OCI-LY7 (cell line): ENCODE measurements at regions of chr2 and their contacts with region 1.

Region 1: DNA sequence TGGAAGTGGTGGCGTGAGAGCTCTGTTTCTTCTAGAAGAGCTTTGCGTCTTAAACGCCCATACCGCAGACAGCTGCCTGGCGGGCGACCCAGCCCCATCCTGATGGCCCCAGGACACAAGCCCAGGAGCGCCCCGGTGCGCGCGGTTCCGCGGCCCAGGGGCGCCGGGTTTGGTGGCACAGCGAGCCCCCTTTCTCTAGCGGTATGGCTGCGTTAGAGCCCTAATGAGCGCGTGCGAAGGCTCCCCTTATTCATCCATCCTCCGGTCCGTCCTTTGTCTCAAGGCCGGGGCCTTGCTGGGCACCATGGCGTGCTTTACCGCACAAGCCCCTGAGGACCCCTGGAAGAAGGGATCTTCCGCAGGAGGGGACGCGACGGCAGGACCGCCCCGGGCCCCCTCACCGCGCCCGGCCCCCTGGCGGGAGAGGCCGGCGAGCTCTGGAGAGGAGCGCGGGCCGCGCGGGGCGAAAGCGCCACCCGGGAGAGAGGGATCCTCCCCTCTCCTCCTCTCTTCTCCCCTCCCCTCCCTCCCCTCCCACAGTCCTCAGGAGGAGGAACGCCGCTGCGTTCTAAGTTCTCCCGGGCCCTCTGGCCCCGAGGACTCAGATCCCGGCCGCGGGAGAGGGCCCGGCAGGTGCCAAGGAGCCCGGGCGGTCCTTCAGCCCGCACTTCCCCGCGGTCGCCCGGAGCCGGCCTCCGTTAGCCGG is 626 bp upstream of the SLC1A4 start:
- DNase-seq: peak; percentile 66
- H3K4me3 ChIP-seq: peak overlapping the region; percentile 82
- H3K27ac ChIP-seq: peak overlapping the region; percentile 25
- H3K4me1 ChIP-seq: peaks cover 47% of the 10 kb centered on the region
- CTCF ChIP-seq: peak; percentile 62

Region 2: DNA sequence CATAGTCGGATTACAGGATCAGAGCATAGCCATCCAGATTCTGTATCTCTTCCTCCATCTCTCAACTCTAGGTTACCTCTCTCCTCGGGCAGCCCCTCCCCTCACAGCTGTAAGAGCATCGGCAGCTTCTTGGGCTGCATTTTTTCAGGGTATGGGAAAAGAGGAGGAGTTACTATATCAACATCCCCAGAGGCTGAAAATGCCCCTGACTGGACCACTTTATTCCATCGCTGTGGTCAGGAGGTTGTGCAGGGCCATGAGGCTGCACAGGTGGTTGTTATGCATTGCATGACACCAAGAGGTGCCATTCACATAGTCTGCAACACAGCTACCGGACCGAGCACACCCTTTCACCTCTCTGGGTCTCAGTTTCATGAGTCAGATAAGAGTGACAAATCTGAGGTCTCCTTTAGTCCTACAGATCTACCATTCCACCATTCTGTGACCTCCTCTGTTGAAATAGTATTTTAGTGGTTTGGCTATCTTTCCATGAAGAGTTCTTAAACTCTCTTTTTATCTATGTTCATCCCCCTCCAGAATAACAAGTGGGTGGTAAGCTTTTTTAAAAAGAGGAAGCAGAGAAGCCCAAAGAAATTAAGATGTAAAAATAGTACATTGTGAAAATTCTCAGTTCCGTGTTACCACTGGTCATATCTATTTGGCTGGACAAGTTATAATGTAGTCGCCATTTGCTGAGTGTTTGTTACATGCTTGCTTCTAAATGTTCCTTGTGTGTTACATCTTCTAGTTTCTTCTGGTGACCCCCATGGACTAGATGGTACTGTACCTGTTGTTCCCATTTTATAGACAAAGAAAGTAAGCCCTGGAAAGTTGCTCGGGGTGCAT is 56.0 kb before region 1 on chr2:
- CTCF ChIA-PET with region 1: interaction called, 4 read pairs
- POLR2A ChIA-PET with region 1: interaction called, 4 read pairs
- intact Hi-C with region 1: loop called (anchors 5 kb)
- DNase-seq: peak; percentile 81
- H3K4me3 ChIP-seq: peak overlapping the region; percentile 77
- H3K27ac ChIP-seq: peak overlapping the region; percentile 88
- H3K4me1 ChIP-seq: peaks cover 71% of the 10 kb centered on the region
- CTCF ChIP-seq: no peak; the same call in 1 of the 2 replicates

Region 3: GRCh38 chr2:65142515-65142914 is 153.9 kb after region 1 on chr2:
- CTCF ChIA-PET with region 1: no interaction called
- POLR2A ChIA-PET with region 1: no interaction called
- intact Hi-C with region 1: no loop called
- DNase-seq: peak; percentile 41
- H3K4me3 ChIP-seq: no peak overlapping the region
- H3K27ac ChIP-seq: no peak overlapping the region
- H3K4me1 ChIP-seq: no peaks in the 10 kb centered on the region
- CTCF ChIP-seq: peak; percentile 74

Region 4: DNA sequence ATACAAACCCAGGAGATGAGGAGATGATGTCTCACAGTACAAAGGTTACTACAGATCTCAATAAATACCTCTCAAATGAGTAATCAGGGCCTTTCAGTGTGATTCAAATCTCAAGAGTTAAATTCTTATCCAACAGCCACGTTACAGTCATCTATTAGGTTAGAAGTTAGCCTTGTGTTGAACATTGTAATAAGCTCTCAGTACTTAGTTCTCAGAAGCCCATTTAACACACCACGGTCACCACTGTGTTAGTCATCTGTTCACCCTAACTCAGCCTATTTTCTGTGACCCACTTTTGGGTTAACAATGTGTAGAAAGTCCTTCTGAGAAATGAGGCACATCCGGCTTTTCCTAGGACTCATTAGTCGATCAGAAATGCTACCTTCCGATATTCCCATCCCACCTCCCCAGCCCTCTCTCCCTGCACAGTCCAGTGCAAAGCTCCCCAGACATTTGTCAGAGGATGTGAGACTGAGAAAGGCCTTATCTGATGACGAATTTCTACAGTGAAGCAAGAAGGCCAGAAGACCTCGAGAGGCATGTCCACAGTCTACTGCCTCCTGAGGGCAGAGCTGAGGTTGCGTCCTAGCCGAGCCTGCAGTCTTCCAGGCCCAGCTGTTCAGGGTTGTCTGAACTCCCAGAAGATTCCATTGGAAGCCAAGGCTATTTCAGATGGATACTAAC is 331.6 kb after region 1 on chr2:
- CTCF ChIA-PET with region 1: no interaction called
- POLR2A ChIA-PET with region 1: no interaction called
- intact Hi-C with region 1: no loop called
- DNase-seq: peak; percentile 42
- H3K4me3 ChIP-seq: no peak overlapping the region
- H3K27ac ChIP-seq: no peak overlapping the region
- H3K4me1 ChIP-seq: peaks cover 46% of the 10 kb centered on the region
- CTCF ChIP-seq: peak; percentile 67